ENCODE measurements at regions of chr3 and their contacts with region 1.

Region 1: GRCh38 chr3:105366326-105367062 is at the start of gene ALCAM:
- DNase-seq: peak; percentile 98
- ATAC-seq: peak; percentile 95
- H3K4me3 ChIP-seq: peak within 1 kb of the TSS; percentile 48 to 87
- H3K27ac ChIP-seq: peak within 1 kb of the TSS; percentile 87 to 89
- H3K4me1 ChIP-seq: no peaks in the 10 kb centered on the region
- H3K27me3 ChIP-seq: no peaks in the 10 kb centered on the region
- total RNA-seq, gene ALCAM: 89.9 to 154 TPM

Region 2: DNA sequence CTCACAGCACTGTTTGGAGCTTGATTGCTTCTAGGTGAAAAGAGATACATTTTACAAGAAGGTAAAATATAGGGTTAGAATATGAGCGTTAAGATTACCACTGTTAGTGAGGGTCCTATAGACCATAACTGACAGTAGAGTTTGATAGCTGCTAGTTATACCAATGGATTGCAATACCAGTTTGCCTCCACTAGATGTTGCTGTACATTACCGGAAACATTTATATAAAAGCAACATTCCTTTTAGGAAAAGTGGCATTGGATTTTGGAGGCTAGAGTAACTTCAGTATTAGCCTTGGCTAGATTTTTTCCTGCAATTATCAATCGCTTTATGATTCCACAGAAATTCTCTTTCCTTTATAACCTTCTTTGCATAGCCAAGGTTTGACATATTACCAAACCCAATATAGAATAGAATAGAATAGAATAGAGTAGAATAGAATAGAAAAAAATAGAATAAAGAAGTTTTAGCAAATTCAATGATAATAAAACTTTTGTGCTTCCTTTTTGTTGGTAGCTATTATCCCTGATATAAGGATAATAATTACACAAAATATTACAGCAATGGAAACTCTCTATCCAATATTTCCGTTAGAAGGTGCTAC is 1093.3 kb before region 1 on chr3:
- intact Hi-C with region 1: loop called (anchors 5 to 10 kb)
- DNase-seq: no peak
- ATAC-seq: no peak
- H3K4me3 ChIP-seq: no peak overlapping the region
- H3K27ac ChIP-seq: no peak overlapping the region
- H3K4me1 ChIP-seq: no peaks in the 10 kb centered on the region
- H3K27me3 ChIP-seq: no peaks in the 10 kb centered on the region

Region 3: GRCh38 chr3:104279617-104280016 is 1086.9 kb before region 1 on chr3:
- intact Hi-C with region 1: loop called (anchors 5 to 10 kb)
- DNase-seq: no peak
- ATAC-seq: no peak
- H3K4me3 ChIP-seq: peak overlapping the region in 1 of 2 donors; percentile 54
- H3K27ac ChIP-seq: no peak overlapping the region
- H3K4me1 ChIP-seq: no peaks in the 10 kb centered on the region
- H3K27me3 ChIP-seq: no peaks in the 10 kb centered on the region

Region 4: GRCh38 chr3:104628185-104628789 is 738.2 kb before region 1 on chr3:
- intact Hi-C with region 1: loop called in 1 of 2 experiments (anchors 10 kb)
- DNase-seq: no peak
- ATAC-seq: no peak
- H3K4me3 ChIP-seq: no peak overlapping the region
- H3K27ac ChIP-seq: no peak overlapping the region
- H3K4me1 ChIP-seq: peaks cover 0 to 2% of the 10 kb centered on the region in 2 donors
- H3K27me3 ChIP-seq: no peaks in the 10 kb centered on the region

Region 5: GRCh38 chr3:104763007-104763406 is 603.5 kb before region 1 on chr3:
- intact Hi-C with region 1: loop called in 1 of 2 experiments (anchors 10 kb)
- DNase-seq: peak in 1 of 2 donors; percentile 22
- ATAC-seq: no peak
- H3K4me3 ChIP-seq: no peak overlapping the region
- H3K27ac ChIP-seq: peak overlapping the region in 1 of 2 donors; percentile 43
- H3K4me1 ChIP-seq: peaks cover 0 to 2% of the 10 kb centered on the region in 2 donors
- H3K27me3 ChIP-seq: no peaks in the 10 kb centered on the region

Region 6: DNA sequence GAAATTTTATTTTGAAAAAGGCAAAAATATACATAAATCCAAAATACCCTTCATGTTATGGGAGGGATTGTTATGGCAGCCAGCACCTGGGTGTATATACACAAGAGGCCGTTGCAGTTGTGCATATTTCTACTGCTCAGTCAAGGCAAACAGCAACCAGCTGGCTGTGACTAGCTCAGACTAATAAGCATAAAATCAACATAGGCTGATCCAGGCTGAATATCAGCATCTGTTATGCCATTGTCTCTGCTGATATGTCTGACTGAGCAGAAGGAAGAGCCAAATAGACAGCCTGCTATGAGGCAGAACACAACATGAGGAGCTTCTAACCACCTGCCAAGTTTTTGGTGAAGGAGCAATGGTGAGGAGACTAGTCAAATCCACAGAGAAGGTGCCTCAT is 457.3 kb before region 1 on chr3:
- intact Hi-C with region 1: loop called in 1 of 2 experiments (anchors 5 kb)
- DNase-seq: no peak
- ATAC-seq: no peak
- H3K4me3 ChIP-seq: no peak overlapping the region
- H3K27ac ChIP-seq: peak overlapping the region in 1 of 2 donors; percentile 38
- H3K4me1 ChIP-seq: peaks cover 0 to 5% of the 10 kb centered on the region in 2 donors
- H3K27me3 ChIP-seq: no peaks in the 10 kb centered on the region

Region 7: DNA sequence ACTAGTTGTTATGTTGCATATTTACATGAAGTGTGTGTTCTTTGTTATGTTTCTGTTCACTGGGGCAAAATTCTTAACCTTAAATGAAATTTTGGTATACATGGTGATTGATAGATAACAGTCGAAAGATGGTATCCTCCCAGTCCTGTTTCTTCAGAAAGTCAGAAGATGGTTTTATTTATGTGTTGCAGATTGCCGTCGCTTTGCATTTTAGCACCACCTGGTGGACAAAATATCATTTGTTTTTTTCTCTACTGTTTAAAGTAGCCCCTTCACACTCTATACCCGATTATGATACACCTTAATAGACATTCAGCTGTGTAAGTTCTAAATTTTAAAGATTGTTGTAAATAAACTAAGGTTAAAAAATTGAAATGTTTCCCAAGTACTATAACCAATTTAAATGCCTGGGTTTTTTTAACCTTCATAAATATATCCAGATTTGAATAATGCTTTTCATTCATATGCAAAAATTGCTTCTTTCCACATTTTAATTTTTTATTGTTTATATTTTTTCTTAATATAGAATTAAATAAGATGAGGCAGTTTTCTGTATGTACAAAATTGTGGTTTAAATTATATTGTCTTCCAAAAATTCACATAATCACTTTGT is 152.4 kb after region 1 on chr3:
- intact Hi-C with region 1: loop called (anchors 5 kb)
- DNase-seq: no peak
- ATAC-seq: no peak
- H3K4me3 ChIP-seq: no peak overlapping the region
- H3K27ac ChIP-seq: no peak overlapping the region
- H3K4me1 ChIP-seq: no peaks in the 10 kb centered on the region
- H3K27me3 ChIP-seq: no peaks in the 10 kb centered on the region

Measured in aorta (tissue), 5 donors.